ENCODE measurements at regions of chr4 and their contacts with region 1.

Region 1: GRCh38 chr4:98928505-98929340 is at the start of gene EIF4E:
- DNase-seq: peak; percentile 98
- H3K4me3 Mint-ChIP-seq: peak within 1 kb of the TSS; percentile 96
- H3K27ac Mint-ChIP-seq: peak within 1 kb of the TSS; percentile 97
- H3K4me1 Mint-ChIP-seq: peaks cover 46% of the 10 kb centered on the region
- H3K27me3 Mint-ChIP-seq: no peaks in the 10 kb centered on the region
- total RNA-seq, gene EIF4E: 80.1 to 88.5 TPM

Region 2: GRCh38 chr4:98260579-98261290 is 668.0 kb before region 1 on chr4:
- CTCF ChIA-PET with region 1: interaction called, 3 read pairs
- POLR2A ChIA-PET with region 1: interaction called, 32 read pairs
- DNase-seq: peak; percentile 91
- H3K4me3 Mint-ChIP-seq: peak overlapping the region; percentile 92
- H3K27ac Mint-ChIP-seq: peak overlapping the region; percentile 93
- H3K4me1 Mint-ChIP-seq: peaks cover 44% of the 10 kb centered on the region
- H3K27me3 Mint-ChIP-seq: no peaks in the 10 kb centered on the region

Region 3: DNA sequence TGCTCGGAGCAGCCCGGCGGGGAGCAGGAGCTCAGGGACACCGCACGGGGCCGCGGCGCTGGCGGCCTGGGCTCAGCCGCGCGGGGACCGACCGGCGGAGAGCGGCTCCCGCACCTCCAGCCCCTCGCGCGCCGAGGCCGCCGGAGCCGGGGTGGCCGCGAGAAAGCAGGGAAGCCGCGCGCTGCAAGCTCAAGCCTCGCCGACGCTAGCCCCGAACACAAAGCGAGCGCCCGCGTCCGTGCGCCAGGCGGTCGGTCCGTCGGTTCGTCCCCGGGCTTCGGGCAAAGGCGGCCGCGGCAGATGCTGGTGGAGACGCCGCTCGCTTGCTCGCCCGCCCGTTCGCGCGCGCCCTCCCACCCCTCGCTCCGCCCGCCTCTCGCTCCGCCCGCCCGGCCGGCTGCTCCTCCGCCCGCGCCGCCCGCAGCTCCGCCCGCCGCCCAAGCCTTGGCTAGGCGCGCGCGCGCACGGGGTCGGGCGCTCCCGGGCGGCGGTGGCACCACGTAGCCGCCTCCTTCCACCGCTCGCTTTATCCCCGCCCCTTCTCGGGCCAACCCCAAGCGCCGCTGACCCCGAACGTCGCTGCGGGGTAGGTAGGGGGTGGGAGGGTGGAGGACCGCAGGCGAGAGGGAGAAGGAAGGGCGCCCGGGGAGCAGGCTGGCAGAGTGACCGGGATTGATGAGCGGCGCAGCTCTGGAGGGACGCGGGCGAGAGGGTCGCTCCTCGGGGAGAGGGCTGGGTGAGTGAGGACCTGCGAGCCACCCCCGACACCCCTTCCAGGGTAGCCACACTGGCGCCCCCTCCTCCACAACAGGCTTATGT is 270.2 kb before region 1 on chr4 and contains the start of gene TSPAN5:
- CTCF ChIA-PET with region 1: interaction called, 3 read pairs
- POLR2A ChIA-PET with region 1: interaction called, 23 read pairs
- DNase-seq: peak; percentile 83
- H3K4me3 Mint-ChIP-seq: peak within 1 kb of the TSS; percentile 93
- H3K27ac Mint-ChIP-seq: peak within 1 kb of the TSS; percentile 74
- H3K4me1 Mint-ChIP-seq: peaks cover 75% of the 10 kb centered on the region
- H3K27me3 Mint-ChIP-seq: no peaks in the 10 kb centered on the region
- total RNA-seq, gene TSPAN5: 21.8 to 22.6 TPM

Region 4: GRCh38 chr4:98861100-98861884 is 67.4 kb before region 1 on chr4:
- CTCF ChIA-PET with region 1: no interaction called
- POLR2A ChIA-PET with region 1: no interaction called
- DNase-seq: no peak
- H3K4me3 Mint-ChIP-seq: no peak overlapping the region
- H3K27ac Mint-ChIP-seq: no peak overlapping the region
- H3K4me1 Mint-ChIP-seq: peaks cover 11% of the 10 kb centered on the region
- H3K27me3 Mint-ChIP-seq: peaks cover 2% of the 10 kb centered on the region

Region 5: GRCh38 chr4:99054428-99054994 is 125.8 kb after region 1 on chr4:
- CTCF ChIA-PET with region 1: interaction called, 18 read pairs
- POLR2A ChIA-PET with region 1: interaction called, 28 read pairs
- DNase-seq: no peak
- H3K4me3 Mint-ChIP-seq: no peak overlapping the region
- H3K27ac Mint-ChIP-seq: peak overlapping the region; percentile 62
- H3K4me1 Mint-ChIP-seq: peaks cover 43% of the 10 kb centered on the region
- H3K27me3 Mint-ChIP-seq: no peaks in the 10 kb centered on the region

Region 6: DNA sequence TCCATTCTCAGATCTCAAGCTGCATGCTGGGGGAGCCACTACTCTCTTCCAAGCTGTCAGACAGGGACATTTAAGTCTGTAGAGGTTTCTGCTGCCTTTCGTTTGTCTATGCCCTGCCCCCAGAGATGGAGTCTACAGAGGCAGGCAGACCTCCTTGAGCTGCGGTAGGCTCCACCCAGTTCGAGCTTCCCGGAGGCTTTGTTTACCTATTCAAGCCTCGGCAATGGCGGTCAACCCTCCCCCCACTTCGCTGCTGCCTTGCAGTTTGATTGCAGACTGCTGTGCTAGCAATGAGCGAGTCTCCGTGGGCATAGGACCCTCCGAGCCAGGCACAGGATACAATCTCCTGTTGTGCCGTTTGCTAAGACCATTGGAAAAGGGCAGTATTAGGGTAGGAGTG is 170.6 kb after region 1 on chr4:
- CTCF ChIA-PET with region 1: no interaction called
- POLR2A ChIA-PET with region 1: no interaction called
- DNase-seq: no peak
- H3K4me3 Mint-ChIP-seq: no peak overlapping the region
- H3K27ac Mint-ChIP-seq: no peak overlapping the region
- H3K4me1 Mint-ChIP-seq: peaks cover 1% of the 10 kb centered on the region
- H3K27me3 Mint-ChIP-seq: peaks cover 8% of the 10 kb centered on the region

Region 7: GRCh38 chr4:99300934-99301333 is 372.2 kb after region 1 on chr4:
- CTCF ChIA-PET with region 1: no interaction called
- POLR2A ChIA-PET with region 1: no interaction called
- DNase-seq: no peak
- H3K4me3 Mint-ChIP-seq: no peak overlapping the region
- H3K27ac Mint-ChIP-seq: no peak overlapping the region
- H3K4me1 Mint-ChIP-seq: no peaks in the 10 kb centered on the region
- H3K27me3 Mint-ChIP-seq: peaks cover 2% of the 10 kb centered on the region